Calu3 (cell line): ENCODE measurements at regions of chr7 and their contacts with region 1.

Region 1: GRCh38 chr7:131302876-131303707 is 24.6 kb upstream of the MKLN1 start:
- DNase-seq: peak; percentile 50
- H3K4me3 Mint-ChIP-seq: no peak overlapping the region
- H3K27ac Mint-ChIP-seq: no peak overlapping the region
- H3K4me1 Mint-ChIP-seq: peaks cover 8% of the 10 kb centered on the region
- H3K27me3 Mint-ChIP-seq: peaks cover 8% of the 10 kb centered on the region
- CTCF ChIP-seq: peak; percentile 44

Region 2: GRCh38 chr7:131071786-131072504 is 231.1 kb before region 1 on chr7:
- CTCF ChIA-PET with region 1: interaction called, 6 read pairs
- intact Hi-C with region 1: loop called (anchors 1 kb)
- DNase-seq: peak; percentile 81
- H3K4me3 Mint-ChIP-seq: peak overlapping the region; percentile 50
- H3K27ac Mint-ChIP-seq: peak overlapping the region; percentile 58
- H3K4me1 Mint-ChIP-seq: peaks cover 26% of the 10 kb centered on the region
- H3K27me3 Mint-ChIP-seq: no peaks in the 10 kb centered on the region
- CTCF ChIP-seq: peak; percentile 67

Region 3: GRCh38 chr7:131107337-131108211 is 195.5 kb before region 1 on chr7:
- CTCF ChIA-PET with region 1: no interaction called
- intact Hi-C with region 1: loop called (anchors 2 kb)
- DNase-seq: peak; percentile 52
- H3K4me3 Mint-ChIP-seq: peak overlapping the region; percentile 100
- H3K27ac Mint-ChIP-seq: peak overlapping the region; percentile 91
- H3K4me1 Mint-ChIP-seq: peaks cover 47% of the 10 kb centered on the region
- H3K27me3 Mint-ChIP-seq: no peaks in the 10 kb centered on the region
- CTCF ChIP-seq: no peak

Region 4: GRCh38 chr7:131231381-131232220 is 71.5 kb before region 1 on chr7:
- CTCF ChIA-PET with region 1: no interaction called
- intact Hi-C with region 1: loop called (anchors 10 kb)
- DNase-seq: no peak
- H3K4me3 Mint-ChIP-seq: no peak overlapping the region
- H3K27ac Mint-ChIP-seq: peak overlapping the region; percentile 18
- H3K4me1 Mint-ChIP-seq: peaks cover 48% of the 10 kb centered on the region
- H3K27me3 Mint-ChIP-seq: no peaks in the 10 kb centered on the region
- CTCF ChIP-seq: no peak